Activated CD8-positive, alpha-beta memory T cell treated with anti-CD3 and anti-CD28 coated beads, Interleukin-2, amount 10 ng/mL, durations not matched to agents 7 days and 5 days (primary cell): ENCODE measurements at regions of chr1 and their contacts with region 1.

Region 1: DNA sequence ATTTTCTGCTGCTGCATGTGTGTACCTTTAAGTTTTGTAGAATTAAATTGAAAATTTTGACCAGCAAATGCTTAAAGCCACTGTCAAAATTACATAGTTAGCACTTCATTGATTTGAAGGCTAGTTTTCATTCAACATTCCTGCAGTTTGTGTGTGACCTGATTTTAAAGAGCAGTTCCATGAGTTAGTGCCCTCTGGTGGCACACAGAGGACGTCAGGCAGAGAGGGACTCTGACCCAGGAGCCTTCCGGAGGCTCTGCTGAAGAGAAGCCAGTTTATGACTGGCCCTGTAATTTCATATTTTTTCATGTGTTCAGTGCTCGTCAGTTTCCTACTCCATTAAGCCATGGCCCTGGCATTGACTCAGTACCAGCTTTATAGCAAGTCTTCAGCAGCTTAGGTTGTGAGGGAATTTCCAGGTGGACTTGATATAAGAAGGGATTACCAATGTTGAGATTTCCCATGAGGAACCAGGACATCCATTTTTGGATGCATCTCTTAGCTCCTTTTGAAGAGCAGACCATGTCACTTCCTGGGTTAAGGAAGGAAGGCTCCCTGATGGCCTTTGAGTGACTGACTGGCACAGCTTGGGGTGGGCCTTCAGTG is 104.7 kb downstream of the CAMTA1 start:
- DNase-seq: peak; percentile 58
- ATAC-seq: peak; percentile 42
- H3K4me3 Mint-ChIP-seq: no peak overlapping the region
- H3K27ac Mint-ChIP-seq: no peak overlapping the region
- H3K4me1 Mint-ChIP-seq: peaks cover under 1% of the 10 kb centered on the region
- H3K27me3 Mint-ChIP-seq: no peaks in the 10 kb centered on the region

Region 2: DNA sequence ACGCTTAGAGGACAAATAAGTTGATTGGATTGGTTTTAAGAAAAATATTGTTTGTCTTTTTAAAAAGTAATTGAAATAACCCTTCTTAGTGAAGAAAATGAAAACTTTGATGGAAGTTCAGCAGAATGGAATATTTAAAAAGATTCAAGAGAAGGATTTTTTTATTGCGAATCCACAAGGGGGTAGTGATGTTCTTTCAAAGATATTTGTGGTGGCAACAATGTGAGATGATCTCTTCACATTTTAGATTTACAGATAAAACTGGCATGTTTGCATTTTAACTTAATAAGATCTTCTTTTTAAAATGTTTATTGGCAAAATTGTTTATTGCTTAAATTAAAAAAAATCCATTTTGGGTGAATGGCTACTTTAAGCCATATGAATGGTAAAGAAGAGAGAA is 95.8 kb before region 1 on chr1:
- CTCF ChIA-PET with region 1: interaction called, 11 read pairs
- DNase-seq: no peak
- ATAC-seq: no peak
- H3K4me3 Mint-ChIP-seq: no peak overlapping the region
- H3K27ac Mint-ChIP-seq: no peak overlapping the region
- H3K4me1 Mint-ChIP-seq: peaks cover 10% of the 10 kb centered on the region
- H3K27me3 Mint-ChIP-seq: no peaks in the 10 kb centered on the region

Region 3: DNA sequence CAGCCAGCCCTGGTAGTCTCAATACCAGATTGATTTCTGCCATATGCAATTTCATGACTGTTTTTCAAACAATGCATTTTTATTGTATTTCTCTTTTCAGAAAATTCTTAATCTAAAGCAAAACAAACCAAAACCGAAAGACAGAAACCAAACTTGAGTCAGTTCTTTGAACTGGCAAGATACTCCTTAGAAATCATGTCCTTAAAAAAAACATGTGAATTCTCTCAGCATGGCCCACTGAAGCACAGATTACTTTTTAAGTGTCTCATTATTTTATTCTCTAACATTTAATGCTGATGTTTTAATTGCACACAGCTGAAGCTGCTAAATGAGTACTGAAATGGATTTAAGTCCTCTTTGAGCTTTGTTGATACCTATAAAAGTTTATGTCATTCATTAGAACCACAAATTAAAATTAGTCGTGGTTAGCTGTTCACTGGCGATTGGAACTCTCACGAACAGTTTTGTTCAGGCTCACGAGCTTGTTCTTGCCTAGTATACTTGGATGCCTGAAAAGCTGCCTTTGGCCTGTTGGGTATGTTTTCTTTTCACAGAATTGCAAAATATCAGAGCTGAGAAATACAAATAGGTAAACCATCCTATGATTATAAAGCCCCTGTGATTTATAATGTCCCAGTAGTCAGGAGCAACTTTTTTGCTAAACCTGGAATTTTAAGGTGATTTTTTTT is 17.3 kb before region 1 on chr1:
- CTCF ChIA-PET with region 1: interaction called, 10 read pairs
- DNase-seq: no peak
- ATAC-seq: peak; percentile 42
- H3K4me3 Mint-ChIP-seq: no peak overlapping the region
- H3K27ac Mint-ChIP-seq: peak overlapping the region; percentile 15
- H3K4me1 Mint-ChIP-seq: peaks cover 31% of the 10 kb centered on the region
- H3K27me3 Mint-ChIP-seq: no peaks in the 10 kb centered on the region